ENCODE measurements at regions of chr5 and their contacts with region 1.

Region 1: DNA sequence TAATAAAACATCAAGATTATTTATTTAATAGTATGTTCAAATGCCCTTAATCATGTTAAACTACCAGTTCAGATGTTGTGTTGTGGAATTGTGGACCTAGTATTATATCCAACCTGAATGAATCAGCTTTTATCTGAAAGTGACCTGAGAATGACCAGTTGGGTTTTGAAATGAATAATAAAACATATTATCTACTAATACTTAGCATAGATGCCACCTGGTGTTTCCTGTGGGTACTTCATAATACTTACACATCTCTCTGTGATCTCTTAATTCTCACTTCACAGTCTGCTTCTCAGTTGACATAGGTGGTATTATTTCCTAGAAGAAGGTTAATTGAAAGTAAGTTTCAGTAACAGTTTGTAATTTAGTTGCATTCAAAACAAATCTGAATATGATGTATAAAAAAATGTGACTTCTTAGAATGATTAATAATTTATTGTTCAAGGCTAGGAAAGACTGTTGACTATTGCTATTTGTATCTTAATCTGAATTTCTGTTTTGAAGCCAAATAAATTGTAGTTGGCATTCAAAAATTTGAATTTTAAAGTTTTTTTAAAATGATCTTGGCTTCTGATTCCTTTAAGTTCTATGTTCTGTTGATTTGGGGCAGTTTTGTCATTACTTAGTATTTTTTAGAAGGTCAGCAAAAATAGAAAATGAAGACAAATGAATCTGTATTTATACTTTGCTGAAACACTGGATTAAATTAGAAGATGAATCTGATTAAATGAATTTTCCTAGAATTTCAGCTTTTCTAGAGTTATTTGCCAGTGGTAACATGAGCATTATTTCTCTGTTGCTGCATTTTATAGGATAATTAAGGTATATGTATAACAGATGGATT is 48.2 kb downstream of the KIF2A start:
- DNase-seq: no peak
- H3K4me3 Mint-ChIP-seq: no peak overlapping the region
- H3K27ac Mint-ChIP-seq: peak overlapping the region; percentile 48
- H3K4me1 Mint-ChIP-seq: peaks cover 30% of the 10 kb centered on the region
- H3K27me3 Mint-ChIP-seq: no peaks in the 10 kb centered on the region

Region 2: DNA sequence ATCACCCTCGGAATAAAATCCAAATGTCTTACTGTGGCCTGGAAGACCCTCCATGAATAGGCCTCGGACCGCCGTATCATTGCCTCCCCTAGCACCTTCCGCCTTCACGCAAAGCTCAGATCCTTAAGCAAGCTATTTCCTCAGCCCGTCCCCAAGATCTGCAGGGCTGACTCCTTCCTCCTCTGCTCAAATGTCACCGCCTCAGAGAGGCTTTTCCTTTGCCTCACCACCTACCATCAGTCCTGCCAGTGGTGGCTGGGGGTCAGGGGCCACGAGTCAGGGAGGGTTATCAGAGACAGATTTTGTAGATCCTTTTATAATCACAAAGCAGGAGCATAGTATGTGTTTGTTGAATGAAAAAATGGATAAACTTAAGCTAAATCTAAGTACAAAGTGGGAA is 122.7 kb before region 1 on chr5:
- CTCF ChIA-PET with region 1: interaction called, 76 read pairs
- POLR2A ChIA-PET with region 1: no interaction called
- DNase-seq: no peak
- H3K4me3 Mint-ChIP-seq: no peak overlapping the region
- H3K27ac Mint-ChIP-seq: no peak overlapping the region
- H3K4me1 Mint-ChIP-seq: peaks cover 43% of the 10 kb centered on the region
- H3K27me3 Mint-ChIP-seq: peaks cover 4% of the 10 kb centered on the region

Region 3: DNA sequence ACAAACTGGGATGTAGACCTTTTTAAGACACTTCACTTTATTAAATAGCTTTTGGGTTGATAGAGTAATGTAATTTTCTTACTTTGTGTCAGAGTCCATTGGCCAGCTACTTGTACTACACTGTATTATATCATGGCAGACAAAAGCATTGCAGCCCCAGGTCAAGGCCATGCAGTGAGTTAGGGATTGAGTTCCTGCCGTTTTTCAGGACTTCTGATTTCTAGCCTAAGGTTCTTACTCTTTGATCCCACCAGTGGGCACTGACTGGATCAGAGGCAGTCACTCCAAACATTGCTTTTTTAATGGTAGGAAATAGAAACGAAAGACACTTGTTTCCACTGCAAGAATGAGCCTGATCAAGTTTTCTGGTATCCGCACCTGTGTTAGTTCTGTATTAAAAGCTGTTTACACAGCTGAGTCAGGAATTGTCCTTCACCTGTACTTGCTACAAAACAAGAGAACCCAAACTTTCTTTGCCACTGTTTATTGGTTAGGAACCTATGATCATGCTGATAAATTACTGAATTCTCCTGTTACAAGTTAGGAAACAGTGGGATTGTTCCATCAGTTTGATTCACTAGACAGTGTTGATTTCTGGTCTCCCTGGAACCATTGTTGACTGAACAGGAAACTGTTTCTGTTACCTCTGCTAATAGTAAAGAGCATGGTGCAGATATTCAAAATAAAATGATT is 246.5 kb after region 1 on chr5:
- CTCF ChIA-PET with region 1: no interaction called
- POLR2A ChIA-PET with region 1: no interaction called
- DNase-seq: no peak
- H3K4me3 Mint-ChIP-seq: no peak overlapping the region
- H3K27ac Mint-ChIP-seq: no peak overlapping the region
- H3K4me1 Mint-ChIP-seq: peaks cover 3% of the 10 kb centered on the region
- H3K27me3 Mint-ChIP-seq: no peaks in the 10 kb centered on the region

Measured in activated CD4-positive, alpha-beta memory T cell treated with anti-CD3 and anti-CD28 coated beads, Interleukin-2, amount 10 ng/mL, durations not matched to agents 7 days and 5 days (primary cell).